Activated T-helper 1 cell treated with anti-CD3 and anti-CD28 coated beads, Interleukin-12 subunit alpha, Interleukin-12 subunit beta, Interleukin-2, Interleukin-4 antibody, amounts not matched to agents 30 ng/mL and 10 ng/mL and 1 ng/mL, durations not matched to agents 14 hours and 24 hours and 36 hours (primary cell): ENCODE measurements at regions of chr3 and their contacts with region 1.

Region 1: DNA sequence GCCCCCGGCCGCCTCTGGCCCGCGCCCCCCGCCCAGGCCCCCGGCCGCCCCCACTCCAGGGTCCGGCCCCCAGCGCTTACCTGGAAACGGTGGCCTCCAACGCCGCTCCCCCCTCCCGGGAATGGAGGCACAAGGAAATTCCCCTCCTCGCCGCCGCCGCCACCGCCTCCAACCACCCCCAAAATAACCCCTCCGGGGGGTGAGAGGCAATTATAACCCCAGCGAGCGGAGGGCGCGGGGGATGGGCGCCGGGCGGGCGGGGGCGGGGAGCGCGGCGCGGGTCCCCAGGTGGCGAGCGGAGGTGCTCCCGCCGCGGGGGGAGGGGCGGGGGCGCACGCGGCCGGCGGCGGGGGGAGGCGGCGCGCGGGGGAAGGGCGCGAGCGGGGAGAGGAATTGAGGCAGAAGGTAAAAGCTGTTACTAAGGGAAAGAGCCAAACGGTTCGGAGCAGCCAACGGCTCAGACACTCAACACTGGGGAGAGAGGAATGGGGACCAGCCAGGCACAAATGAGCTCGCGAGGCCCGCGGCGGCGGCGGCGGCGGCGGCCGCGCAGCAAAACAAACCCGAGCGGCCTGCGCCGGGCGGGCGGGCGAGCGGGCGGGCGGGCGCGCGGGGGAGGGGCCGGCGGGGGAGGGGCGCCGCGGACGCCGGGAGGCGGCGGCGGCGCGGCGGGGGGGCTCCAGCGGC is at the start of gene TBL1XR1:
- DNase-seq: peak; percentile 86
- H3K4me3 Mint-ChIP-seq: peak within 1 kb of the TSS; percentile 98
- H3K27ac Mint-ChIP-seq: peak within 1 kb of the TSS; percentile 99
- H3K4me1 Mint-ChIP-seq: peaks cover 66% of the 10 kb centered on the region
- H3K27me3 Mint-ChIP-seq: no peaks in the 10 kb centered on the region
- total RNA-seq, gene TBL1XR1: 184 and 190 TPM in 2 replicates

Region 2: GRCh38 chr3:177057768-177058167 is 139.4 kb before region 1 on chr3:
- intact Hi-C with region 1: loop called (anchors 1 kb)
- DNase-seq: peak; percentile 10
- H3K4me3 Mint-ChIP-seq: no peak overlapping the region
- H3K27ac Mint-ChIP-seq: no peak overlapping the region
- H3K4me1 Mint-ChIP-seq: peaks cover 7% of the 10 kb centered on the region
- H3K27me3 Mint-ChIP-seq: no peaks in the 10 kb centered on the region

Region 3: GRCh38 chr3:177314897-177315296 is 117.7 kb after region 1 on chr3:
- intact Hi-C with region 1: loop called (anchors 1 kb)
- DNase-seq: no peak
- H3K4me3 Mint-ChIP-seq: no peak overlapping the region
- H3K27ac Mint-ChIP-seq: no peak overlapping the region
- H3K4me1 Mint-ChIP-seq: peaks cover 15% of the 10 kb centered on the region
- H3K27me3 Mint-ChIP-seq: peaks cover 3% of the 10 kb centered on the region

Region 4: GRCh38 chr3:177359593-177360357 is 162.6 kb after region 1 on chr3:
- intact Hi-C with region 1: loop called (anchors 1 kb)
- DNase-seq: peak; percentile 93
- H3K4me3 Mint-ChIP-seq: peak overlapping the region; percentile 80
- H3K27ac Mint-ChIP-seq: peak overlapping the region; percentile 97
- H3K4me1 Mint-ChIP-seq: peaks cover 48% of the 10 kb centered on the region
- H3K27me3 Mint-ChIP-seq: no peaks in the 10 kb centered on the region

Region 5: DNA sequence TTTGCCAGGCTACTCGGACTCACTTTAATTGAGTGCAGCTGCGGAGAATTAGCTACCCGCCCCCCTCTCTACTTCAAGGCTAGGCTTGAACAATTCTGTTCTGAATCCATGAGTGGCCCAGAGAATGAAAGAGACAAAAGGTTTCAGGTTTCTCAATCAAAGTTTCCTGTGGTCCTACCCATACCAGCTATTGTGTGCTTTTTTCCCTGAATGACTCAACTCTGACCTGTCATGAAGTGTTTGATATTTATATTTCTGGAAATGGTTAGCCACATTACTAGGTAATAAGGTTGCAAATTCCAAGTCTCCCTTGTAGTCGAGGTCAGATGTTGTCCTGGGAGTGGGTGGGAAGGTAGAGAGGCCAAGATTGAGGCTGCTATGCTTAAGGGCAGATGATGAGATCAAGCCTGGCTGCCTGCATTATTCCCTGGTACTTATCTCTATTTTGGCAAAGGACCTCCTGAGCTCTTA is 392.8 kb after region 1 on chr3:
- intact Hi-C with region 1: loop called (anchors 5 kb)
- DNase-seq: no peak
- H3K4me3 Mint-ChIP-seq: no peak overlapping the region
- H3K27ac Mint-ChIP-seq: no peak overlapping the region
- H3K4me1 Mint-ChIP-seq: peaks cover 34% of the 10 kb centered on the region
- H3K27me3 Mint-ChIP-seq: no peaks in the 10 kb centered on the region

Region 6: GRCh38 chr3:177883957-177884356 is 686.8 kb after region 1 on chr3:
- intact Hi-C with region 1: loop called (anchors 5 kb)
- DNase-seq: no peak
- H3K4me3 Mint-ChIP-seq: no peak overlapping the region
- H3K27ac Mint-ChIP-seq: no peak overlapping the region
- H3K4me1 Mint-ChIP-seq: peaks cover 20% of the 10 kb centered on the region
- H3K27me3 Mint-ChIP-seq: no peaks in the 10 kb centered on the region

Region 7: GRCh38 chr3:179147873-179148615 is 1950.9 kb after region 1 on chr3 and contains the start of gene PIK3CA:
- intact Hi-C with region 1: loop called (anchors 5 kb)
- DNase-seq: peak; percentile 90
- H3K4me3 Mint-ChIP-seq: peak within 1 kb of the TSS; percentile 93
- H3K27ac Mint-ChIP-seq: peak within 1 kb of the TSS; percentile 97
- H3K4me1 Mint-ChIP-seq: peaks cover 38% of the 10 kb centered on the region
- H3K27me3 Mint-ChIP-seq: peaks cover 23% of the 10 kb centered on the region
- total RNA-seq, gene PIK3CA: 18.9 and 19.7 TPM in 2 replicates